CD4-positive, alpha-beta T cell (primary cell): ENCODE measurements at regions of chr17 and their contacts with region 1.

Region 1: DNA sequence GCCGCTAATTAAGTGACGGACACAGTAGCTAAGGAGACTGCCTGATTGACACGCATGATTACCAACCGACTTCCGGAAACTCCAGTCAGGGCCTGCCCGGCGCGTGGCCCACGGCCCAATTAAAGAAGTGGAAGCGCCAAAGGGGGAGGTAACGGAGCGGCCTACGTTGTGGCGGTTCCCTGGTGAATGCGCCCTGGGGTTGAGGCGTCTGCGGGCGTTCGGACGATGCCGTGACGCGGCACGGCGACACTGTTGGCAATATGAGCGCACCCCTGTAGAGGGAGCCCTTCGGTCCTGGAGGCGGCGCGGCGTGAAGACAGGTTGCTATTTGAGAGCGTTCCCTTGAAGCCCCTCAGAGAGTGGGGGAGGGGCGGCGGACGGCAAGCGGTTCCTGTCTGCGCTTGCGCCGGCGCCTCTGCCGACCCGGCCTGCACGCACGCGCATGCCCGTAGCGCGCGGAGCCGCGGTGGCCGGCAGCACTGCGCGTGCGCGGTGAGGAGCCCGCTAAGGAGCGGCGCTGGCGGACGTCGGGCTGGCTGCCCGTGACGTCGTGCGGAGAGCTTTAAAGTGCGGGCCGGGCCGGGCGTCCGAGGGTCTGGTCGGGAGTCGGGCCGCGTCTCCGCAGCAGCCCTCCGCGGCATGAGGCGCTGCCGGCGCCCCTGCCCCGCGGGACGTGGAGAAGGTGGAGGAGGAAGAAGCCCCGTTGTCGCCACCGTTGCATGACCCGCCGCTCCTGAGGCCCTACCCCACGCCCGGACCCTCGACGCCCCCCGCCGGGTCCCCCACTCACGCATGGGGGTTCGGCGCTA is at the start of gene ALKBH5:
- DNase-seq: peak; percentile 93 to 99 (median 96)
- ATAC-seq: peak; percentile 80
- H3K4me3 ChIP-seq: peak within 1 kb of the TSS; percentile 88
- H3K4me3 Mint-ChIP-seq: peak within 1 kb of the TSS; percentile 98
- H3K27ac ChIP-seq: peak within 1 kb of the TSS; percentile 92 to 98
- H3K27ac Mint-ChIP-seq: peak within 1 kb of the TSS; percentile 97
- H3K4me1 ChIP-seq: peaks cover 56% of the 10 kb centered on the region
- H3K4me1 Mint-ChIP-seq: peaks cover 59% of the 10 kb centered on the region
- H3K27me3 ChIP-seq: no peaks in the 10 kb centered on the region
- H3K27me3 Mint-ChIP-seq: no peaks in the 10 kb centered on the region
- CTCF ChIP-seq: peak; percentile 29
- total RNA-seq, gene ALKBH5: 117 to 119 TPM

Region 2: GRCh38 chr17:17280613-17281549 is 902.7 kb before region 1 on chr17 and contains the start of gene COPS3:
- CTCF ChIA-PET with region 1: no interaction called
- POLR2A ChIA-PET with region 1: no interaction called
- intact Hi-C with region 1: loop called in 1 of 2 experiments (anchors 10 kb)
- DNase-seq: peak; percentile 92 to 99 (median 96)
- ATAC-seq: peak; percentile 87
- H3K4me3 ChIP-seq: peak within 1 kb of the TSS; percentile 98
- H3K4me3 Mint-ChIP-seq: peak within 1 kb of the TSS; percentile 99
- H3K27ac ChIP-seq: peak within 1 kb of the TSS; percentile 96 to 99
- H3K27ac Mint-ChIP-seq: peak within 1 kb of the TSS; percentile 98
- H3K4me1 ChIP-seq: peaks cover 36% of the 10 kb centered on the region
- H3K4me1 Mint-ChIP-seq: peaks cover 46% of the 10 kb centered on the region
- H3K27me3 ChIP-seq: no peaks in the 10 kb centered on the region
- H3K27me3 Mint-ChIP-seq: no peaks in the 10 kb centered on the region
- CTCF ChIP-seq: no peak
- total RNA-seq, gene COPS3: 73.1 to 75.0 TPM

Region 3: GRCh38 chr17:18038861-18039534 is 144.5 kb before region 1 on chr17 and contains the starts of genes ATPAF2 and GID4:
- CTCF ChIA-PET with region 1: no interaction called
- POLR2A ChIA-PET with region 1: no interaction called
- intact Hi-C with region 1: loop called in 1 of 2 experiments (anchors 2 kb)
- DNase-seq: peak; percentile 99 to 100 (median 100)
- ATAC-seq: peak; percentile 91
- H3K4me3 ChIP-seq: peak within 1 kb of the TSS; percentile 93
- H3K4me3 Mint-ChIP-seq: peak within 1 kb of the TSS; percentile 100
- H3K27ac ChIP-seq: peak within 1 kb of the TSS; percentile 72 to 74
- H3K27ac Mint-ChIP-seq: peak within 1 kb of the TSS; percentile 91
- H3K4me1 ChIP-seq: peaks cover 34% of the 10 kb centered on the region
- H3K4me1 Mint-ChIP-seq: peaks cover 54% of the 10 kb centered on the region
- H3K27me3 ChIP-seq: no peaks in the 10 kb centered on the region
- H3K27me3 Mint-ChIP-seq: no peaks in the 10 kb centered on the region
- CTCF ChIP-seq: no peak
- total RNA-seq, gene ATPAF2: 20.8 to 21.9 TPM
- total RNA-seq, gene GID4: 3.4 to 3.7 TPM

Region 4: DNA sequence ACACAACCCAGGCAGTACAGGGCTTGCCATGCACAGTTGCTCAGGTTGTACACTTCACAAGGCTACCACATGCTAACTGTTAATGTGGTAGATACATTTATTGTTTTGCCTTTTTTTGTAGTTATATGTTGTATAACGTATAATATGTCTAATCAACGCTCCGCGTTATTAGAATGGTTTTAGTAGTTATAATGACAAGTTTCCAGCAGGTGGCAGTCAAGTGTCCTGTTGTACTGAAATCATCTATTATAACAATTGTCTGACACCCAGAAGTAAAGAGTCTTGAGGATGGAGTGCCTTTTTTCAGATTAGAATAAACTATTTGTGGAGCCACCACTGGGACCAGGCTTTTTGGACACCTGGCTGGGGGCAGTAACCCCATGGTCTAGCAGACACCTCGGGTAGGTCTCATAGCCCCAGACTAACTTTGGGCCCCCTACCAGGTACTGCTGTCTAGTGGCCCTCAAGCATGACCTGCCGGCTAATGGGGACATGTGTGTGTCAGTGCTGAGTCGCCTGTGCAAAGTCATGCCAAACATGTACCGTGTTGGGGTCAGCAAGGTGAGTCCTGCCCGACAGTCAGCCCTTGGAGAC is 42.2 kb before region 1 on chr17:
- CTCF ChIA-PET with region 1: interaction called, 4 read pairs
- POLR2A ChIA-PET with region 1: interaction called, 8 read pairs
- intact Hi-C with region 1: loop called (anchors 1 kb)
- DNase-seq: peak in 8 of 14 experiments; percentile 17 to 81 (median 46)
- ATAC-seq: peak; percentile 85
- H3K4me3 ChIP-seq: no peak overlapping the region
- H3K4me3 Mint-ChIP-seq: no peak overlapping the region
- H3K27ac ChIP-seq: no peak overlapping the region
- H3K27ac Mint-ChIP-seq: no peak overlapping the region
- H3K4me1 ChIP-seq: peaks cover 9% of the 10 kb centered on the region
- H3K4me1 Mint-ChIP-seq: peaks cover 5% of the 10 kb centered on the region
- H3K27me3 ChIP-seq: no peaks in the 10 kb centered on the region
- H3K27me3 Mint-ChIP-seq: peaks cover 5% of the 10 kb centered on the region
- CTCF ChIP-seq: peak; percentile 73

Region 5: DNA sequence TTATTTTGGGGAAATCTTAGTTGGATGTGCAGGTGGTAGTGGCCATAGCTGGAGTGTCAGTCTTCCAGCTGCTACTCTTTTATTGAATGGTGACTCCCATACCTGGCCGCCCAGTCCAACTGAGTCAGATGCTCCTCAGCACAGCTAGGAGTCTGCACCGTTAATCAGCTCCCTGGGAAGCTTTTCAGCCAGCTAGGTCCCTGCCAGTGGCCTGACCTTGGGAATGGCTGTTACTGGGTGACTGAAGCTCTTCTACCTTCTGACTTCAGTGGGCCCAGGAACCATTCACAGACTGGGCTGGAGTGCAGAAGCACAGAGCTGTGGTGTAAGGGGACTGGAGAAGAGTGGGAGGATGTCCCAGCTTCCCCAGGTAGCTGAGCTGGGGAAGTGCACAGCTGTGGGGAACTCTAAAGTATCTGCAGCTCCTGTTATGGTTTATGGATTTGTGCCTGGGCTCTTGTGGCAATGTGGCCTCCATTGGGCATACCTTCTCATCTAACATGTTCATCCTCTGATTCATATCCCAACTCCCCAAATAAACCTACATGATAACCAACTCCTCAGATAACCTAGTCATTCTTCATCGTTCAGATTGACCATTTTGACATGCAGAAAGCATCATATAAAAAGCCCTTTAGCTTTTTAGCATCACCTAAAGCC is 14.1 kb after region 1 on chr17:
- CTCF ChIA-PET with region 1: interaction called, 3 read pairs
- POLR2A ChIA-PET with region 1: interaction called, 17 read pairs
- intact Hi-C with region 1: no loop called
- DNase-seq: no peak
- ATAC-seq: no peak
- H3K4me3 ChIP-seq: no peak overlapping the region
- H3K4me3 Mint-ChIP-seq: no peak overlapping the region
- H3K27ac ChIP-seq: no peak overlapping the region
- H3K27ac Mint-ChIP-seq: peak overlapping the region; percentile 70
- H3K4me1 ChIP-seq: peaks cover 54% of the 10 kb centered on the region
- H3K4me1 Mint-ChIP-seq: peaks cover 56% of the 10 kb centered on the region
- H3K27me3 ChIP-seq: no peaks in the 10 kb centered on the region
- H3K27me3 Mint-ChIP-seq: no peaks in the 10 kb centered on the region
- CTCF ChIP-seq: no peak

Region 6: GRCh38 chr17:18225121-18225566 is 41.6 kb after region 1 on chr17:
- CTCF ChIA-PET with region 1: no interaction called
- POLR2A ChIA-PET with region 1: interaction called, 7 read pairs
- intact Hi-C with region 1: loop called in 1 of 2 experiments (anchors 1 kb)
- DNase-seq: peak; percentile 90 to 97 (median 97)
- ATAC-seq: peak; percentile 98
- H3K4me3 ChIP-seq: peak overlapping the region; percentile 29
- H3K4me3 Mint-ChIP-seq: peak overlapping the region; percentile 84
- H3K27ac ChIP-seq: no peak overlapping the region
- H3K27ac Mint-ChIP-seq: peak overlapping the region; percentile 62
- H3K4me1 ChIP-seq: peaks cover 42% of the 10 kb centered on the region
- H3K4me1 Mint-ChIP-seq: peaks cover 25% of the 10 kb centered on the region
- H3K27me3 ChIP-seq: no peaks in the 10 kb centered on the region
- H3K27me3 Mint-ChIP-seq: no peaks in the 10 kb centered on the region
- CTCF ChIP-seq: no peak

Region 7: GRCh38 chr17:18314731-18315561 is 131.4 kb after region 1 on chr17 and contains the starts of genes SMCR8 and TOP3A:
- CTCF ChIA-PET with region 1: no interaction called
- POLR2A ChIA-PET with region 1: interaction called, 3 read pairs
- intact Hi-C with region 1: loop called in 1 of 2 experiments (anchors 1 kb)
- DNase-seq: peak; percentile 94 to 99 (median 97)
- ATAC-seq: peak; percentile 95
- H3K4me3 ChIP-seq: peak within 1 kb of the TSS; percentile 86
- H3K4me3 Mint-ChIP-seq: peak within 1 kb of the TSS; percentile 93
- H3K27ac ChIP-seq: peak within 1 kb of the TSS; percentile 96 to 98
- H3K27ac Mint-ChIP-seq: peak within 1 kb of the TSS; percentile 84
- H3K4me1 ChIP-seq: peaks cover 74% of the 10 kb centered on the region
- H3K4me1 Mint-ChIP-seq: peaks cover 85% of the 10 kb centered on the region
- H3K27me3 ChIP-seq: no peaks in the 10 kb centered on the region
- H3K27me3 Mint-ChIP-seq: no peaks in the 10 kb centered on the region
- CTCF ChIP-seq: no peak
- total RNA-seq, gene SMCR8: 52.2 to 54.5 TPM
- total RNA-seq, gene TOP3A: 21.5 to 24.8 TPM

Region 8: DNA sequence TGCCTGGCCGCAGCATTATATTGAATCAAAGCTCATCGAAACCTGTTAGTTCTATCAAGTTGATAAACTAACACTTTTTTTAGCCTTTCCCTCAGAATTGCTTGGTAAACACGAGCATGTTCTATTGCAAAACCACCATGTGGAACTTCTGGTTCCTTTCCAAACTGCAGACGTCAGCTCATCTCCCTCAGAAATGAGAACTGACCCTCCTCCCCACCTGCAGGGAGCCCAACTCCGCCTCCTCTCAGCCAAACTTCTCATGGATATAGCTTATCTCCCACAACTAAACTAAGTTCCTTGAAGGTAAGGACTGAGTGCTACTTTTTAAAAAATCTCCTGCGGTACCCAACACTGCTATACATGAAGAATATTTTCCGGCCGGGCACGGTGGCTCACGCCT is 173.1 kb after region 1 on chr17:
- CTCF ChIA-PET with region 1: no interaction called
- POLR2A ChIA-PET with region 1: no interaction called
- intact Hi-C with region 1: no loop called
- DNase-seq: no peak
- ATAC-seq: no peak
- H3K4me3 ChIP-seq: no peak overlapping the region
- H3K4me3 Mint-ChIP-seq: no peak overlapping the region
- H3K27ac ChIP-seq: no peak overlapping the region
- H3K27ac Mint-ChIP-seq: no peak overlapping the region
- H3K4me1 ChIP-seq: no peaks in the 10 kb centered on the region
- H3K4me1 Mint-ChIP-seq: no peaks in the 10 kb centered on the region
- H3K27me3 ChIP-seq: no peaks in the 10 kb centered on the region
- H3K27me3 Mint-ChIP-seq: no peaks in the 10 kb centered on the region
- CTCF ChIP-seq: no peak